HEK293T (cell line): ENCODE measurements at regions of chr11 and their contacts with region 1.

Region 1: DNA sequence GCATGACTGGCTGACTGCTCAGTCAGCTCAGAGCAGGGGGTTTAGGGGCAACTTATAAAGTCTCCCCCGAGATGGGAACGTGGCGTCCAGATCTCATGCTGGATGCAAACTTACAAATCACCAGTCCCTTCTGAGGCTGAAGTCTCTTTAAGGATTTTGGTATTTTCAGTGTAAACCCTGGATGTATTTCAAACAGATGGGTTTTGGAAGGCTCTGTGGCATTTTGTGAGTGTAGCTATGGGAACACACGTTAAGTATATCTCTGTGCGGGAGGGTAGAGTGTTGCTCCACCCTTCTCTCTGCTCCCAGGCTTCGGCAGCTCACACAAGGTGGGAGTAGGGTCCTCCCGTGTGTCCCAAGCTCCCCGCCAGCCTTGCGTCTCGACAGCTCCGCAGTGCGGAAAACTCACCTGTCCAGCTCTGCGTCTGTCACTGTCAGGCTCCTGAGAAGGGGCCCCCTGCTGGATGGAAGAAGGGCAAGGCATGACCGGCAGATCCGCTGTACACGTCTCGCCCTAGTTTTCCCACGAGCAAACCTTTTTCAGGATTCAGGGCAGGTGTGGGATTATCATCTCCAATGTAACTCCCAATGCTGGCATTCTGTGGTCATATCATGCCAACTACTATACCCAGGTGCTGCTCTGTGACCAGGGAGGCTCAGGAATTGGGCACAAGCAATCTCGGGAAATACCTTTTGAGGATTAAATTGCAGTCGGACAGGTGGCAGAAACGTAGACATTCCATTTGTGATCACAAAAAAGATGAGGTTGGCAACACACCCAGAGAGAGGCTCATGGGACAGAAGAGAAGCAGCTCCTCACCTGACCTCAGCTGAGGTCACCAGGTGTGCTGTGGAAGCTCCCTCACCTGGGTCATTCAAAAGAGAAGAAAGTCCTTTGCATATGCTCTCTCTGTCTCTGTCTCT is 313.9 kb upstream of the B3GAT1 start:
- DNase-seq: peak; percentile 54

Region 2: DNA sequence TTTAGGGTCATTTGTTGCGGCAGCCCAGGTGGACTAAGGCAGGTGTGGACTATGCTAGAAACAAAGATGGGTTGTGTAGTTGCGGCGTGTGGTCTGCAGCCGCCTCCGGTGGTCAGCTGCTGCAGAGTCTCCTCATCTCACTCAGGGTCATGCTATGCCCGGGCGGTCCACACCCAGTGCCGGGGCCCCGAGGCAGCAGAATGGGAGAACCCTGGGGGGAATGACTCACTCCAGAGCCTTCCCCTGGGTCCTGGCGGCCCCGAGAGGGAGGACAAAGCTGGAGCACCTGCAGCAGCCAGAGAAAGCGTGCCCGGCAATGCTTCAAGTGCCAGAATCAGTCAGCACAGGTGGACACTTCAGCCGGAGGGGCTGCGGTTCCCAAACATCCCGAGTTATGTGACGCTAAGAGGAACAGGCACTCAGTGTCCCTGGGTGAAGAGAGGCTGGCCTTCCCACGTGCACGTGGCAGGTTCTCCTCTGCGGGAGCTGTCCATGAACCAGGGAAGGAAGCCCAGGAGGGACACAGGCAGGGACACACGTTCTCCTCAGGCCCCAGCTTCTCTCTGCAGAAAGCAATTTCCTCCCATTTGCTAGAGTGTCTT is 24.3 kb before region 1 on chr11:
- CTCF ChIA-PET with region 1: interaction called, 10 read pairs
- POLR2A ChIA-PET with region 1: no interaction called
- DNase-seq: no peak

Region 3: DNA sequence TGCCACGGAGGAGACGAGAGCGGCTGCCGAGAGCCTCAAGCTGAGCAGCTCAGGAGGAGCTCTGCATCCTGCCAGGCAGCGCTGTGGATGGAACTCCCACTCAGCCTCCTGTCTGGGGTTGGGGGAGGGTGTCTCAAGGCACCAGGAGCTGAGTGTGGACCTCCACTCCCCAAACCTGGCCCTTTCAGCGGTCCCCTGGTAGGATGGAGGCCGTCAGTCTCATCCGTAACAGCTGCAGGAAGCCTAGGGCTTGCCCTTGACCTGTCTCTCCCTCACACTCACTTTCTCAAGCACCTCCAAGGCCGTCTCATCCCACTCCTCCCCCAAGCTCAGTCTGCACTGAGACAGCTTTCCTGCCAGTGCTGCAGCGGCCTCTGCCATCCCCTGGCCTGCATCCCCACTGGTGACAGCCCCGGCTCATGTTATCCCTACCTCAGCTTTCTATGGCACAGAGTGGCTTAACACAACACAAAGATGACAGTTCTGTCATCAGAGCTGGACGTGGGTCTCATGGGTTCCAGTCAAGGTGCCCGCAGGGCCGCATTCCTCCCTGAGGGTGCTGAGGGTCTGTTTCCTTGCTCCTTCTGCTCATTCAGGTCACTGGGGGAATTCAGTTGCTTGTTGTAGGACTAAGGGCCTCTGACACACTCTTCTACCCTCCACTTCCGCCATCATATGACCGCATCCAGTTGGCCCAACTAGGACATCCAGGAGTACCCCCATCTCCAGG is 28.0 kb after region 1 on chr11:
- CTCF ChIA-PET with region 1: no interaction called
- POLR2A ChIA-PET with region 1: no interaction called
- DNase-seq: no peak

Region 4: GRCh38 chr11:135069890-135070289 is 343.9 kb after region 1 on chr11:
- CTCF ChIA-PET with region 1: no interaction called
- POLR2A ChIA-PET with region 1: no interaction called
- DNase-seq: no peak